HepG2 (cell line): ENCODE measurements at regions of chr2 and their contacts with region 1.

Region 1: GRCh38 chr2:223797811-223798721 is 39.3 kb downstream of the AP1S3 start:
- DNase-seq: peak; percentile 59
- ATAC-seq: peak; percentile 87
- H3K4me3 ChIP-seq: no peak overlapping the region
- H3K27ac ChIP-seq: no peak overlapping the region
- H3K4me1 ChIP-seq: peaks cover 11% of the 10 kb centered on the region; the same call in 1 of the 2 replicates
- H3K27me3 ChIP-seq: no peaks in the 10 kb centered on the region
- CTCF ChIP-seq: peak; percentile 77
- EP300 ChIP-seq: no peak
- POLR2A ChIP-seq: no peak
- RAD21 ChIP-seq: peak; percentile 75

Region 2: DNA sequence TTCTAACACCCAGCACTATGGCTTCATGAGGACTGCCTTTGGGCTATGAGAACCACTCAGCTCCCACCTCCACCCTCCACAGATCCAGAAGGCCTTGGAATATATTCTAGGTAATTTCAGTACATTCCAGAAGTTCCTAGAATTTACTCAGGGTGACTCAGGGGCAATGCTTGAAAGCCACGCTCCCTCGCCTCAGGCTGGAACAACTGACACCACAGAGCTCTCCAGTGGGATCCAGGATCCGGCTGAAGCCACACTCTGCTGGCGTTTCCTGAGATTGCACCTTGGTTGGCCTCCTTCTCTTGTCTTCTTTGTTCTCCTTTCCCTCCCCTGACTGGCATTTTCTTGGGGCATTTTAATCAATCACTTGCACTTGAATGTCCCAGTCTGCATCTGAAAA is 838.7 kb before region 1 on chr2:
- CTCF ChIA-PET with region 1: no interaction called
- POLR2A ChIA-PET with region 1: no interaction called
- in situ Hi-C with region 1: loop called (anchors 25 kb)
- intact Hi-C with region 1: no loop called
- DNase-seq: peak; percentile 45
- ATAC-seq: peak; percentile 85
- H3K4me3 ChIP-seq: no peak overlapping the region
- H3K27ac ChIP-seq: no peak overlapping the region
- H3K4me1 ChIP-seq: peaks cover 11% of the 10 kb centered on the region; the same call in 1 of the 2 replicates
- H3K27me3 ChIP-seq: peaks cover 0 to 4% of the 10 kb centered on the region in 2 experiments; a peak in 1 of 5 replicates
- CTCF ChIP-seq: peak; percentile 47
- EP300 ChIP-seq: no peak
- POLR2A ChIP-seq: no peak
- RAD21 ChIP-seq: peak; percentile 53

Region 3: GRCh38 chr2:223306371-223306770 is 491.7 kb before region 1 on chr2:
- CTCF ChIA-PET with region 1: interaction called, 3 read pairs
- POLR2A ChIA-PET with region 1: no interaction called
- in situ Hi-C with region 1: no loop called
- intact Hi-C with region 1: loop called (anchors 1 kb)
- DNase-seq: peak; percentile 9
- ATAC-seq: peak; percentile 56; the same call in 2 of the 3 replicates
- H3K4me3 ChIP-seq: no peak overlapping the region
- H3K27ac ChIP-seq: no peak overlapping the region
- H3K4me1 ChIP-seq: no peaks in the 10 kb centered on the region
- H3K27me3 ChIP-seq: no peaks in the 10 kb centered on the region
- CTCF ChIP-seq: peak; percentile 45
- EP300 ChIP-seq: no peak
- POLR2A ChIP-seq: no peak
- RAD21 ChIP-seq: no peak

Region 4: DNA sequence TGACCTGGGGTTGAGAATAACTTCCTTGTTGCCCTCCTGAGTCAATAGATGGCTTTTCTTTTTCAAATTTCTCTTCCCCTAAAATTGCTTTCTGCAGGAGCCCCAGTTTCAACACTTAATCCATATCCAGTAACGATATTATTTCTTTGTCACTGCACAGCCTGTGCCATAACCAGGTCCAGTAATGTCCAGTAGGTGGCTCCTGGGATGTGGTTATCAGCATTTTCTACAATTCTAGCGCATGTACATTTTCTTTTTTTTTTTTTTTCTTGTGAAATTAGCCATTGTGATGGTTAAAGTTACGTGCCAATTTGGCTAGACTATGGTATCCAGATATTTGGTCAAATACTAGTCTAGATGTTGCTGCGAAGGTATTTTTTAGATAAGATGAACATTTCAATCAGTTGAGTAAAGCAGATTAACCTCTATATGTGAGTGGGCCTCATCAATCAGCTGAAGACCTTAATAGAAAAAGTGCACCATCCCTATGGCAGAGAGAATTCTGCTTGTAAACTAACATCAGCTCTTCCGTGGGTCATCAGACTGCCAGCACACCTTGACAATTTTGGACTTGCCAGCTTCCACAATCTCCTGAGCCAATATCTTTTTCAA is 123.0 kb before region 1 on chr2:
- CTCF ChIA-PET with region 1: interaction called, 9 read pairs
- POLR2A ChIA-PET with region 1: no interaction called
- in situ Hi-C with region 1: no loop called
- intact Hi-C with region 1: loop called (anchors 1 kb)
- DNase-seq: peak; percentile 30
- ATAC-seq: peak; percentile 96
- H3K4me3 ChIP-seq: no peak overlapping the region
- H3K27ac ChIP-seq: no peak overlapping the region
- H3K4me1 ChIP-seq: no peaks in the 10 kb centered on the region
- H3K27me3 ChIP-seq: no peaks in the 10 kb centered on the region
- CTCF ChIP-seq: peak; percentile 71
- EP300 ChIP-seq: no peak
- POLR2A ChIP-seq: no peak
- RAD21 ChIP-seq: no peak

Region 5: GRCh38 chr2:223727562-223727961 is 70.5 kb before region 1 on chr2:
- CTCF ChIA-PET with region 1: interaction called, 6 read pairs
- POLR2A ChIA-PET with region 1: no interaction called
- in situ Hi-C with region 1: no loop called
- intact Hi-C with region 1: loop called (anchors 1 kb)
- DNase-seq: peak; percentile 64
- ATAC-seq: peak; percentile 76
- H3K4me3 ChIP-seq: no peak overlapping the region
- H3K27ac ChIP-seq: no peak overlapping the region
- H3K4me1 ChIP-seq: peaks cover 35% of the 10 kb centered on the region
- H3K27me3 ChIP-seq: no peaks in the 10 kb centered on the region
- CTCF ChIP-seq: peak; percentile 75
- EP300 ChIP-seq: no peak
- POLR2A ChIP-seq: no peak
- RAD21 ChIP-seq: peak; percentile 37; the same call in 1 of the 2 replicates

Region 6: DNA sequence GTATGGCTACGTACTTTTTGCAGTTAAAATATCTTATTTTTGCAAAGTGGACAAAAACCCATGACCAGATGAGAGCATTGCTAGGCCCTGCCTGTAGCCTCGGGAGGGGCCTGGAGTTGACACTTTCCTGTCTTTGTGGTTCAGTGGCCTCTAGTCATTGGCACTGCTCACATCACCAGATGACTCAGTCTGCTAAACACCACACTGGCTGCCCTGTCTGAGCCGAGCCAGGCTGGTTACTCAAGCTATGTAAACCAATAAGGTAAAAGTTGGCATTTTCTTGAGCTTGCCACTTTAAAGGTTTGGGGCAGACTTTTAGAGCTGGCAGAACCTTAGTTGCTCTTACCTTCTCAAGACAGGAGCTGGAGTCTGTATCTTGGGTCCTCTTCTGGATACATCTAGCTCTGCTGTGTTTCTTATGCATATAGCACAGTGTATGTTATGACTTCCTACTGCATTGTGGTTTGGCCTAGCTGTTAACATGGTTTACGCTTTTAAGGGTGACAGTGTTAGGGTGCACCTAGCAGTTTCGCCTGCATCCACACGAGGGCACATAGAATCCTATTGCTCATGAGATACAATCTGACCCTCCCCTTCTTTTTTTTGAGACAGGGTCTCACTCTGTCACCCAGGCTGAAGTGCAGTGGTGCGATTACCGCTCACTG is 37.1 kb before region 1 on chr2:
- CTCF ChIA-PET with region 1: no interaction called
- POLR2A ChIA-PET with region 1: no interaction called
- in situ Hi-C with region 1: no loop called
- intact Hi-C with region 1: no loop called
- DNase-seq: peak; percentile 77
- ATAC-seq: peak; percentile 76
- H3K4me3 ChIP-seq: no peak overlapping the region
- H3K27ac ChIP-seq: no peak overlapping the region
- H3K4me1 ChIP-seq: peaks cover 41% of the 10 kb centered on the region
- H3K27me3 ChIP-seq: no peaks in the 10 kb centered on the region
- CTCF ChIP-seq: peak; percentile 22; the same call in 1 of the 2 replicates
- EP300 ChIP-seq: no peak
- POLR2A ChIP-seq: no peak
- RAD21 ChIP-seq: no peak

Region 7: GRCh38 chr2:224062481-224063297 is 264.6 kb after region 1 on chr2:
- CTCF ChIA-PET with region 1: no interaction called
- POLR2A ChIA-PET with region 1: no interaction called
- in situ Hi-C with region 1: no loop called
- intact Hi-C with region 1: no loop called
- DNase-seq: no peak
- ATAC-seq: peak; percentile 67
- H3K4me3 ChIP-seq: no peak overlapping the region
- H3K27ac ChIP-seq: no peak overlapping the region
- H3K4me1 ChIP-seq: 0 out of 2 replicates have a peak, but pooled peaks cover 5% of the 10 kb centered on the region
- H3K27me3 ChIP-seq: peaks cover 0 to 18% of the 10 kb centered on the region in 2 experiments; a peak in 2 of 5 replicates
- CTCF ChIP-seq: peak; percentile 41
- EP300 ChIP-seq: no peak
- POLR2A ChIP-seq: no peak
- RAD21 ChIP-seq: no peak

Region 8: GRCh38 chr2:224142397-224143312 is 344.6 kb after region 1 on chr2:
- CTCF ChIA-PET with region 1: no interaction called
- POLR2A ChIA-PET with region 1: no interaction called
- in situ Hi-C with region 1: no loop called
- intact Hi-C with region 1: no loop called
- DNase-seq: no peak
- ATAC-seq: no peak
- H3K4me3 ChIP-seq: no peak overlapping the region
- H3K27ac ChIP-seq: no peak overlapping the region
- H3K4me1 ChIP-seq: peaks cover 60% of the 10 kb centered on the region
- H3K27me3 ChIP-seq: peaks cover 0 to 2% of the 10 kb centered on the region in 2 experiments; a peak in 1 of 5 replicates
- CTCF ChIP-seq: no peak
- EP300 ChIP-seq: no peak
- POLR2A ChIP-seq: no peak
- RAD21 ChIP-seq: no peak